ENCODE measurements at regions of chr19 and their contacts with region 1.

Region 1: GRCh38 chr19:8028951-8029491 is 23.5 kb upstream of the CCL25 start:
- DNase-seq: no peak
- H3K4me3 ChIP-seq: no peak overlapping the region
- H3K27ac ChIP-seq: no peak overlapping the region
- H3K4me1 ChIP-seq: no peaks in the 10 kb centered on the region
- H3K27me3 ChIP-seq: no peaks in the 10 kb centered on the region
- CTCF ChIP-seq: no peak

Region 2: GRCh38 chr19:8071912-8072311 is 42.9 kb after region 1 on chr19:
- CTCF ChIA-PET with region 1: no interaction called
- dilution Hi-C with region 1: loop called (anchors 5 kb)
- in situ Hi-C with region 1: no loop called
- intact Hi-C with region 1: no loop called
- DNase-seq: no peak
- H3K4me3 ChIP-seq: no peak overlapping the region
- H3K27ac ChIP-seq: no peak overlapping the region
- H3K4me1 ChIP-seq: no peaks in the 10 kb centered on the region
- H3K27me3 ChIP-seq: no peaks in the 10 kb centered on the region
- CTCF ChIP-seq: no peak

Region 3: DNA sequence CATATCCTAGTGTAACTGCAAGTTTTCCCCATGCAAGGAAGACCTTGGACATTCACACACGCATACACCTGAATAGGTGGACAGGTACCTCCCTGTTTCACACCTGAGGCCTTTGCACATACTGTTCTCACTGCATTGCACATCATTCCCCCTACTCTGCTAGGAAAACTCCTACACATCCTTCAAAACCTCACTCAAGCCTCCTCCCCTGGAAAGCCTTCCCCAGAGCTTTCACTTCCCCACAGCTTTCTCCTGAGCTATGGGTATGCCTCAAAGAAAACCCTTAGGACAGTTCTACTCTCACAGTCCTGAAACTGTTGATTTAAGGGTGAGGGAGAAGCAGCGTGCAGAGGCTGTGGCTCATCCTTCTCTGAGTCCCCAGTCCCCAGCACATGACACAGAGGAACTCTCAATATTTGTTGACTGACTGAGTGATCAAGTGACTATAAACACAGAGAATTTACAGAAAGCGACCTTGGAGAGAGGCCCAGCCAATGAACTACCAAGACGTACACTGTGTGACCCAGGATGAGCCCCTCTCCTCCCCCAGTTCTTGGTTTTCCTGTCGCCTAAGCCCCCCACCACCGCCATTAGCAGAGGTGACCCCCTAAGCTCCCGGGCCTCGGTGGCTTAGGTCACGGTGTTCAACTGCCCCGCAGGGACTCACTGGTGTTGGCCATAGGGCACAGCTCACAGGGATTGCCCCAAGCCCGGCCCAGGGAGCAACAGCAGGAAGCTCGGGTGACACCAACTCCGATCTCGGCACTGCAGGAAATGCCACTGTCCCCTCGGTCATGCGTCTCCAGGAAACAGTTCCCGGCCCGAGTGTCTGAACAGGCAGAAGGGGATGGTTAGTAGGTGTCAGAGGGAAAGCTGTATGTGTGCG is 79.8 kb after region 1 on chr19:
- CTCF ChIA-PET with region 1: no interaction called
- dilution Hi-C with region 1: loop called (anchors 5 kb)
- in situ Hi-C with region 1: no loop called
- intact Hi-C with region 1: no loop called
- DNase-seq: no peak
- H3K4me3 ChIP-seq: no peak overlapping the region
- H3K27ac ChIP-seq: no peak overlapping the region
- H3K4me1 ChIP-seq: no peaks in the 10 kb centered on the region
- H3K27me3 ChIP-seq: no peaks in the 10 kb centered on the region
- CTCF ChIP-seq: no peak

Measured in mammary epithelial cell (primary cell).